ENCODE measurements at regions of chrX and their contacts with region 1.

Region 1: GRCh38 chrX:88024022-88024421 is 506.4 kb downstream of the KLHL4 start:
- DNase-seq: no peak
- ATAC-seq: no peak
- H3K4me3 ChIP-seq: no peak overlapping the region
- H3K27ac ChIP-seq: no peak overlapping the region
- H3K4me1 ChIP-seq: no peaks in the 10 kb centered on the region
- H3K27me3 ChIP-seq: no peaks in the 10 kb centered on the region
- CTCF ChIP-seq: no peak
- POLR2A ChIP-seq: no peak
- RAD21 ChIP-seq: no peak

Region 2: DNA sequence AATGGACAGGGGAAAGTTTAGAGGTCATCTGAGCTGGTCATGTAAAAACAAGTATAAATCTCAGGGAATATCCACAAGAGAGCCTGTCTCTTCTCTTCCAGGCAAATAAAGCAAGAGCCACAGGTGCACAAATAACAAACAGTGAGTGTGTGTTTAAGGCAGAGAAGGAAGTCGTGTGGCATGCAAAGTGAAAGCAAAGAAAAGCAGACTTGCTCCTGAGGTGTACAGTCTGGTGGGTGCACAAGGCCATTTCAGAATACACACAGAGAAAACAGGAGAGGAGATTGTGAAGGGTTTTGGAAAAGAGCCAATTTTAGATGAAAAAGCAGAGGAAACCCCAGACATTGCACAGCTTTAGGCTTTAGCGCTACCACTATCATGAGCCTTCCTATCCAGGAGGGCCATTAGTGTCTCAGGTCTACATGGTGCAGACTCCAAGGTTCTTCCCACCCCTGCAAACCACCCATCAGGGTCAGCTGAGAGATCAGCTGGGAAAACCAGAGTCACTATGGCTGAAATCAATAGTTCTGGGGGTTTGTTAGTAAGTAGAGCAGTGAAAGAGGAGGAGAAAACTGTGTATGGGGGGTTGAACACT is 150.6 kb before region 1 on chrX:
- CTCF ChIA-PET with region 1: no interaction called
- POLR2A ChIA-PET with region 1: no interaction called
- RAD21 ChIA-PET with region 1: no interaction called
- intact Hi-C with region 1: loop called (anchors 10 kb)
- DNase-seq: no peak
- ATAC-seq: no peak
- H3K4me3 ChIP-seq: no peak overlapping the region
- H3K27ac ChIP-seq: no peak overlapping the region
- H3K4me1 ChIP-seq: no peaks in the 10 kb centered on the region
- H3K27me3 ChIP-seq: no peaks in the 10 kb centered on the region
- CTCF ChIP-seq: no peak
- POLR2A ChIP-seq: no peak
- RAD21 ChIP-seq: no peak

Region 3: GRCh38 chrX:87975365-87975764 is 48.7 kb before region 1 on chrX:
- CTCF ChIA-PET with region 1: no interaction called
- POLR2A ChIA-PET with region 1: no interaction called
- RAD21 ChIA-PET with region 1: no interaction called
- intact Hi-C with region 1: no loop called
- DNase-seq: no peak
- ATAC-seq: no peak
- H3K4me3 ChIP-seq: no peak overlapping the region
- H3K27ac ChIP-seq: no peak overlapping the region
- H3K4me1 ChIP-seq: no peaks in the 10 kb centered on the region
- H3K27me3 ChIP-seq: no peaks in the 10 kb centered on the region
- CTCF ChIP-seq: no peak
- POLR2A ChIP-seq: no peak
- RAD21 ChIP-seq: no peak

Region 4: DNA sequence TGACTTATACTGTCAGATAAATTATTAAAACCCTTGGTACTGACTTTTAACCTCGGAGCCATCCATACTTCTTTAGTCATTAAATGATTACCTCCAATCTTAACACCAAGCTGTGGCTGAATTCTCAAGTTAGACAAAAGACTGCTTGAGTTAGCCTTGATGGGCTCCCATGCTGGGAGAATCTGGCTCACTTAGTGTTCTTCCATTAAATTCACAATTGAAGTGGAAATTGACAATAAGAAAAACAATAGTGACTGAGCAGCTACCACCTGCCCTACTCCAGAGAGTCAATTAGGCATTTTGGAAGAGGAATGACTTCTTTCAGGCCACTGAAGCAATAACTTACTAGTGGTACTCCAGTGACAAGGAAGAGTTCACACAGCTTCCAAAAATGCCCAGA is 220.0 kb after region 1 on chrX:
- CTCF ChIA-PET with region 1: no interaction called
- POLR2A ChIA-PET with region 1: no interaction called
- RAD21 ChIA-PET with region 1: no interaction called
- intact Hi-C with region 1: no loop called
- DNase-seq: no peak
- ATAC-seq: no peak
- H3K4me3 ChIP-seq: no peak overlapping the region
- H3K27ac ChIP-seq: no peak overlapping the region
- H3K4me1 ChIP-seq: no peaks in the 10 kb centered on the region
- H3K27me3 ChIP-seq: no peaks in the 10 kb centered on the region
- CTCF ChIP-seq: no peak
- POLR2A ChIP-seq: no peak
- RAD21 ChIP-seq: no peak